ENCODE measurements at regions of chr12 and their contacts with region 1.

Region 1: GRCh38 chr12:6752921-6753771 is at the start of gene MLF2:
- DNase-seq: peak; percentile 96 to 100
- H3K4me3 ChIP-seq: peak within 1 kb of the TSS; percentile 72 to 91 (median 88)
- H3K27ac ChIP-seq: peak within 1 kb of the TSS; percentile 94
- H3K4me1 ChIP-seq: peaks cover 0 to 4% (median 3%) of the 10 kb centered on the region in 4 experiments; a peak in 5 of 7 replicates
- H3K27me3 ChIP-seq: no peaks in the 10 kb centered on the region
- CTCF ChIP-seq: peak in 1 of 3 experiments; percentile 85; a peak in 1 of 4 replicates
- EP300 ChIP-seq: no peak
- POLR2A ChIP-seq: peak; percentile 61 to 71
- RAD21 ChIP-seq: no peak
- total RNA-seq, gene MLF2: 229 and 232 TPM in 2 replicates

Region 2: GRCh38 chr12:6451348-6452244 is 301.6 kb before region 1 on chr12 and contains the start of gene TAPBPL:
- CTCF ChIA-PET with region 1: no interaction called
- POLR2A ChIA-PET with region 1: no interaction called
- DNase-seq: peak in 1 of 2 experiments; percentile 73
- H3K4me3 ChIP-seq: peak within 1 kb of the TSS in 3 of 4 experiments; percentile 7 to 42 (median 27); a peak in 4 of 8 replicates
- H3K27ac ChIP-seq: peak within 1 kb of the TSS; percentile 78
- H3K4me1 ChIP-seq: peaks cover 23 to 36% (median 31%) of the 10 kb centered on the region in 4 experiments
- H3K27me3 ChIP-seq: no peaks in the 10 kb centered on the region
- CTCF ChIP-seq: no peak
- EP300 ChIP-seq: no peak
- POLR2A ChIP-seq: no peak
- RAD21 ChIP-seq: no peak
- total RNA-seq, gene TAPBPL: 0.61 and 0.67 TPM in 2 replicates

Region 3: GRCh38 chr12:6730169-6730568 is 23.0 kb before region 1 on chr12:
- CTCF ChIA-PET with region 1: interaction called, 18 read pairs
- POLR2A ChIA-PET with region 1: interaction called, 25 read pairs
- DNase-seq: no peak
- H3K4me3 ChIP-seq: no peak overlapping the region
- H3K27ac ChIP-seq: no peak overlapping the region
- H3K4me1 ChIP-seq: no peaks in the 10 kb centered on the region
- H3K27me3 ChIP-seq: no peaks in the 10 kb centered on the region
- CTCF ChIP-seq: peak in 1 of 3 experiments; percentile 9; a peak in 1 of 4 replicates
- EP300 ChIP-seq: no peak
- POLR2A ChIP-seq: no peak
- RAD21 ChIP-seq: no peak

Region 4: GRCh38 chr12:6764011-6764828 is 11.1 kb after region 1 on chr12:
- CTCF ChIA-PET with region 1: interaction called, 427 read pairs
- POLR2A ChIA-PET with region 1: interaction called, 151 read pairs
- DNase-seq: peak; percentile 91 to 94
- H3K4me3 ChIP-seq: peak overlapping the region in 2 of 4 experiments; percentile 6 to 98; a peak in 4 of 8 replicates
- H3K27ac ChIP-seq: peak overlapping the region; percentile 77
- H3K4me1 ChIP-seq: peaks cover 8 to 21% (median 14%) of the 10 kb centered on the region in 4 experiments
- H3K27me3 ChIP-seq: no peaks in the 10 kb centered on the region
- CTCF ChIP-seq: no peak
- EP300 ChIP-seq: peak in 1 of 2 experiments; percentile 57; a peak in 1 of 3 replicates
- POLR2A ChIP-seq: peak in 1 of 2 experiments; percentile 33; a peak in 1 of 3 replicates
- RAD21 ChIP-seq: no peak

Region 5: GRCh38 chr12:6825398-6826124 is 72.4 kb after region 1 on chr12:
- CTCF ChIA-PET with region 1: interaction called, 296 read pairs
- POLR2A ChIA-PET with region 1: interaction called, 75 read pairs
- DNase-seq: peak; percentile 61 to 98
- H3K4me3 ChIP-seq: peak overlapping the region; percentile 8 to 53 (median 28); a peak in 7 of 8 replicates
- H3K27ac ChIP-seq: no peak overlapping the region
- H3K4me1 ChIP-seq: peaks cover 8 to 45% (median 29%) of the 10 kb centered on the region in 4 experiments
- H3K27me3 ChIP-seq: peaks cover 0 to 12% (median 8%) of the 10 kb centered on the region in 4 experiments; a peak in 5 of 7 replicates
- CTCF ChIP-seq: peak in 2 of 3 experiments; percentile 91 to 95; a peak in 3 of 4 replicates
- EP300 ChIP-seq: no peak
- POLR2A ChIP-seq: no peak
- RAD21 ChIP-seq: peak; percentile 88 to 93

Region 6: GRCh38 chr12:6851921-6852650 is 98.9 kb after region 1 on chr12 and contains the start of gene USP5:
- CTCF ChIA-PET with region 1: interaction called, 12 read pairs
- POLR2A ChIA-PET with region 1: interaction called, 21 read pairs
- DNase-seq: peak; percentile 94 to 99
- H3K4me3 ChIP-seq: peak within 1 kb of the TSS; percentile 79 to 94 (median 88)
- H3K27ac ChIP-seq: peak within 1 kb of the TSS; percentile 77; the same call in 1 of the 2 replicates
- H3K4me1 ChIP-seq: peaks cover 0 to 14% (median 3%) of the 10 kb centered on the region in 4 experiments; a peak in 5 of 7 replicates
- H3K27me3 ChIP-seq: no peaks in the 10 kb centered on the region
- CTCF ChIP-seq: no peak
- EP300 ChIP-seq: no peak
- POLR2A ChIP-seq: peak in 1 of 2 experiments; percentile 79; a peak in 2 of 3 replicates
- RAD21 ChIP-seq: no peak
- total RNA-seq, gene USP5: 148 and 159 TPM in 2 replicates

Region 7: GRCh38 chr12:6937481-6938297 is 184.5 kb after region 1 on chr12:
- CTCF ChIA-PET with region 1: no interaction called
- POLR2A ChIA-PET with region 1: no interaction called
- DNase-seq: peak in 1 of 2 experiments; percentile 93
- H3K4me3 ChIP-seq: peak overlapping the region; percentile 42 to 69 (median 58)
- H3K27ac ChIP-seq: peak overlapping the region; percentile 90
- H3K4me1 ChIP-seq: peaks cover 0 to 13% (median 5%) of the 10 kb centered on the region in 4 experiments; a peak in 5 of 7 replicates
- H3K27me3 ChIP-seq: no peaks in the 10 kb centered on the region
- CTCF ChIP-seq: peak in 2 of 3 experiments; percentile 90 to 99; a peak in 3 of 4 replicates
- EP300 ChIP-seq: peak; percentile 56 to 63; a peak in 1 of 3 replicates
- POLR2A ChIP-seq: peak in 1 of 2 experiments; percentile 93; a peak in 2 of 3 replicates
- RAD21 ChIP-seq: peak; percentile 51 to 53; a peak in 3 of 4 replicates